Posterior vena cava (tissue), 2 donors: ENCODE measurements at regions of chrX and their contacts with region 1.

Region 1: GRCh38 chrX:47285836-47286320 is 53.1 kb downstream of the USP11 start:
- DNase-seq: no peak

Region 2: DNA sequence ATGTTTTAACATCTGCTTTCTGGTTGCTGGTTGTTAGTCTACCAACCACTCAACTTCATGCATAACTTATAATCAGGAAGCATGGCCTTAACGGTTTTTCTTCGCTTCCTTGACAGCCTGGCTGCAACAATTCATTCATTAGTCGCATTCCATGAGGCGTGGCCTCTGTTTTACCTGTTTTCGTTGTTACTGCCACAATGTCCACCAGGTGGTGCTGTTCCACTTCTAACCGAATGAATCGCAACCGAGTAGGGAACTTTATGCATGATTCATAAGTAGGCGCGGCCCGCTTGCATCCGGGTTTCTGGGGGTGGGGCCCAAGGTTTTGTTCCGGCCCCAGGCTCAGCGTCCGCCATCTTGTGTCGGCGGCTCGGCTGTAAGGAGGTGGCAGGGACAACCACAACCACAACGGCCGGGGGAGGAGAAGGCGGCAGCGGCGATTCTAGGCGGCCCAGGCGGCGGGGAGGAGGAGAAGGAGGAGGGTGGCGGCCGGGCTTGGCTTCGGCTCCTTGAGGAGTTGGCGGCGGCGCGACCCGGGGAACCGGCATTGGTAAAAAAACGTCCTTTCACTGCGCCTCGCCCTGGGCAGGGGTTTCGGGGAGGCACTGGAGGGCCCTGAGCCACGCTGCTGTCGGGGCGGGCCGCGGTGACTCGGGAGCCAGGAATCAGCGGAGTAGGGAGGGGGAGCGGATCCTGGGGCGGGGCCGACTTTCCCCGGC is 92.2 kb before region 1 on chrX and contains the start of gene UBA1:
- intact Hi-C with region 1: no loop called
- DNase-seq: peak; percentile 99
- total RNA-seq, gene UBA1: 151 to 179 TPM

Region 3: DNA sequence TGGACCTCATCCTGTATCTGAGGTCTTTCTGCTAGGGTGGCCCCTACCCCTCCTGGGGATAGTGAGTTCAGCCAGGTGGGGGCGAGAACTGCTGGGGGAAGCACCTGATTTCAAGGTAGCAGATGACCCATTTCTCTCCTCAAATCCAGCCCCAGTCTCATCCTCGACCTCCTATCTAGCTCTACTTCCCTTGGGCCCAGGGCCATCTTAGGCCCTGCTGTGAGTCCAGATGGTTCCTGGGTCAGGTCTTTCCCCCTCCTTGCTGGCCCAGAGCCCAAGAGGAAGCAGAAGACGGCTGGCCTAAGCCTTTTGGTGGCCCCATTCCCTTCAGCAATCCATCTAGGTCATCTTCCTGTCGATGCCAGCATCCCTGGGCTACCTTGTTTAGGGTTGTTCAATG is 64.1 kb before region 1 on chrX:
- intact Hi-C with region 1: loop called in 1 of 2 experiments (anchors 2 kb)
- DNase-seq: peak; percentile 18

Region 4: DNA sequence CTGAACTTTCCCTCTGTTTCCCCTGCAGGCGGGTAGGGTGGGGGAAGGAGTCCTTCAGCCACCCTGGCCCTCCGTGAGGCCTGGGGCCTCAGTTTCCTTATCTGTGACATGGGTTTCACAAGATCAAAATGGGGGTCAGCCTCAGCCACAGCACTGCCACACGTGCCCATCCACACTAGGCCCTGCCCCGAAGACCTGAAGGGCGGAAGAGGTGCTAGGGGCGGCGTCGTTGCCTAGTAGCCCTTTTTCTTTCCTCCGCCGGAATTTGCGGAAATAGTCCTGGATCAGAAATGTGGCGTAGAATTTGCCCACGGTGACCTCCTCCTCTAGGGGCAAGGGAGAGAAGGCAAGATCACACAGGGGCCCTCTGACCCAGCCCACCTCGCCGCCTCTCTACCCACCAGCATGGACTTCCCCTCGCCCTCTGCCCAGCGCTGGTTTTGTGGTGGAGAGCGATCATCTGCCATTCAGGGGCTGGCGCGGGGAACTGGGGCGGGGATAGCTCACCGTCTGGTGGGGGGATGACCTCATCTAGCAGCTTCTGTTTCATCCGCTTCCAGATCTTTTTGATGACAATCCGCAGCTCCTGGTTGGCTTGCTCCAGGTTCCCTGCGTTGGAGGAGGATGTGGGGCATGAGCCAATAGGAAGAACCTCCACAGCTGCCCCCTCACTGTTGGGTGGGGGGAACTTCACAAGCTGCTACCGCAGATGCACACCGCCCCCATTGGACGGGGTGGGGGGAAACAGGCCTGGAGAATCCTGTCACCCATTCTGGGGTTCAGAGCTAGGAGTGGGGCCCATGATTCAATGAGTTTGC is 1923.8 kb after region 1 on chrX:
- intact Hi-C with region 1: no loop called
- DNase-seq: no peak

Region 5: DNA sequence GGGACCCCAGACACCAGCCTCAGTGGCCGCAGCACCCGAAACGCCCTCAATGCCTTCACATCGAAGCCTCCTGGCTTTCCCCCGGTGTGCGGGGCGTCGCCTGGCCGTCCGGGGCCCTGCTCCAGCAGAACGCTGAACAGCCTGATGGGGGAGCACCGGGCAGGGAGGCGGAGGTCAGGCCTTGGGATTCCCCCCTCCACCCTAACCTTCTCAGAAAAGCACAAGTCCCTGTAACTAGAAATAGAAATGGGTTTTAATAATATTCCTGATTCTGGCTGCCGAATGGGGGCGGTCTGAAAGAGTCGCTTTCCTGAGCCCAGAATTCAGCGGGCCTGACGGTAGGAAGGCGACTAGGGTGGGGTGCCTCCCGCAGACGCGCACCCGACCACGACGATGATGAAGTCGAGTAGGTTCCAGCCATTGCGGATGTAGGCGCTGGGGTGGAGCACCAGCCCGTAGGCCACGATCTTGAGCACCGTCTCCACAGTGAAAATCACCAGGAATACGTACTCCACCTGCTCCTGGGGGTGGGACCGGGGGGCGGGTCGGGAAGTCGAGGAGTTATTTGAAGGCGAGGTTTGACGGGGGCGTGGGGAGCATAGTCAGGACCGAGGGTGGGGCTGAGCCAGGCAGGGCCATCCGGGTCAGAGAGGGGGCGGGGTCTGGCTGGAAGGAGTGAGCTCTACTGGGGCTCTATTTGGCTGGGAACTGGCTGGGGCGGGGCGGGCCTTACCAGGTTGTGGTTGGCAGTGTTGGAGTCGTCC is 1944.8 kb after region 1 on chrX:
- intact Hi-C with region 1: no loop called
- DNase-seq: peak; percentile 91